ENCODE measurements at regions of chr7 and their contacts with region 1.

Region 1: DNA sequence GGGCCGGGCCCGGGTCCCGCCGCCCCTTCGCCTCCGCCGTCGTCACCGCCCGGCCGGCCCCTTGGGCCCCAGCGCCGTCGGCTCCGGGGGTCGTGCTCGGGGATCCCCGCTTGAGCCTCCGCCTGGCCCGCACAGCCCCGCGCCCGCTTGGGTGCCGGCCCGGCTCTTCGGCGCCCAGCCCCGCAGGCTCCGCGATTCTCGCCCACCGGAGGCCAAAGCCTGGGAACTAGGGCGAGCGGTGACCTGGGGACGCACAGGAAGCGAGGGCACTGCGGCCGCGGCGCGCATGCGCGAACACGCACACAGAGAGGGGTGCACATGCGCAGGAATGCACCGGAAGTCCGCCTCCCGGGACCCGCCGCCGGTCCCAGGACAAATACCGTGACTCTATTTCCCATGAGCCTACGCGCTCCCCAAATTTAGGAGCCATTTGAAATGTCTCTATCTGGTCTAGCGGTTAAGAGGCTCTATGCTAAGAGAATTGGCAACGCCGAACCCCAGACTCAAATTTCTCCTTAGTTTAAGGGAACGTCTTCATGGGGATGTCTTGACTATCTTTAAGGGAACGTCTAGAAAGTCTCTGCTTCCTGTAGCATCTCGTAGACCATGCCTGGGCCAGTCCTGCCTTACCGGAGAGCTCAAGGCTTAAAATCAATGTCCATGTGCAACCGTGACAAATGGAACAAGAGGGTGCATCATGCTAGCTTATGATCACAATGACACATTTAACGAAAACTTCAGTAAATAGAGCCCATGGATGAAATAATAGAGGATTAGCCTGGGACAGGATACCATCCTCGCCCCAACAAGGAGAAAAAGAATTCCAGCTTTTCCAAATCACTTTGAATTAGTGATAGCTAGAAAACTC is at the start of gene ZNF12:
- DNase-seq: peak; percentile 76 to 98
- H3K4me3 ChIP-seq: peak within 1 kb of the TSS; percentile 94 to 100
- H3K27ac ChIP-seq: peak within 1 kb of the TSS; percentile 80 to 88
- H3K4me1 ChIP-seq: peaks cover 7 to 16% of the 10 kb centered on the region in 2 donors
- H3K27me3 ChIP-seq: no peaks in the 10 kb centered on the region
- CTCF ChIP-seq: no peak
- total RNA-seq, gene ZNF12: 28.8 TPM

Region 2: GRCh38 chr7:6577365-6578113 is 129.4 kb before region 1 on chr7 and contains the start of gene ZDHHC4:
- intact Hi-C with region 1: loop called (anchors 5 kb)
- DNase-seq: peak; percentile 32 to 92
- H3K4me3 ChIP-seq: peak within 1 kb of the TSS; percentile 61 to 69
- H3K27ac ChIP-seq: peak within 1 kb of the TSS; percentile 89 to 94
- H3K4me1 ChIP-seq: peaks cover 0 to 7% of the 10 kb centered on the region in 2 donors
- H3K27me3 ChIP-seq: no peaks in the 10 kb centered on the region
- CTCF ChIP-seq: no peak
- total RNA-seq, gene ZDHHC4: 5.1 TPM

Region 3: GRCh38 chr7:6637544-6638229 is 69.2 kb before region 1 on chr7:
- intact Hi-C with region 1: loop called (anchors 5 kb)
- DNase-seq: peak in 1 of 2 donors; percentile 72
- H3K4me3 ChIP-seq: peak overlapping the region; percentile 97 to 99
- H3K27ac ChIP-seq: peak overlapping the region; percentile 50 to 71
- H3K4me1 ChIP-seq: peaks cover 4 to 12% of the 10 kb centered on the region in 2 donors
- H3K27me3 ChIP-seq: no peaks in the 10 kb centered on the region
- CTCF ChIP-seq: peak in 1 of 3 experiments; percentile 16

Region 4: GRCh38 chr7:6729492-6730342 is 22.8 kb after region 1 on chr7:
- intact Hi-C with region 1: loop called (anchors 1 kb)
- DNase-seq: peak; percentile 73 to 96
- H3K4me3 ChIP-seq: peak overlapping the region; percentile 79 to 94
- H3K27ac ChIP-seq: peak overlapping the region; percentile 73 to 86
- H3K4me1 ChIP-seq: peaks cover 0 to 8% of the 10 kb centered on the region in 2 donors
- H3K27me3 ChIP-seq: no peaks in the 10 kb centered on the region
- CTCF ChIP-seq: peak; percentile 6 to 12 (median 6)

Region 5: GRCh38 chr7:7182156-7183060 is 475.5 kb after region 1 on chr7 and contains the start of gene C1GALT1:
- intact Hi-C with region 1: loop called (anchors 5 kb)
- DNase-seq: peak; percentile 90 to 98
- H3K4me3 ChIP-seq: peak within 1 kb of the TSS; percentile 87 to 93
- H3K27ac ChIP-seq: peak within 1 kb of the TSS; percentile 89 to 94
- H3K4me1 ChIP-seq: peaks cover 0 to 7% of the 10 kb centered on the region in 2 donors
- H3K27me3 ChIP-seq: no peaks in the 10 kb centered on the region
- CTCF ChIP-seq: peak in 2 of 3 experiments; percentile 26 to 44
- total RNA-seq, gene C1GALT1: 11.0 TPM

Region 6: DNA sequence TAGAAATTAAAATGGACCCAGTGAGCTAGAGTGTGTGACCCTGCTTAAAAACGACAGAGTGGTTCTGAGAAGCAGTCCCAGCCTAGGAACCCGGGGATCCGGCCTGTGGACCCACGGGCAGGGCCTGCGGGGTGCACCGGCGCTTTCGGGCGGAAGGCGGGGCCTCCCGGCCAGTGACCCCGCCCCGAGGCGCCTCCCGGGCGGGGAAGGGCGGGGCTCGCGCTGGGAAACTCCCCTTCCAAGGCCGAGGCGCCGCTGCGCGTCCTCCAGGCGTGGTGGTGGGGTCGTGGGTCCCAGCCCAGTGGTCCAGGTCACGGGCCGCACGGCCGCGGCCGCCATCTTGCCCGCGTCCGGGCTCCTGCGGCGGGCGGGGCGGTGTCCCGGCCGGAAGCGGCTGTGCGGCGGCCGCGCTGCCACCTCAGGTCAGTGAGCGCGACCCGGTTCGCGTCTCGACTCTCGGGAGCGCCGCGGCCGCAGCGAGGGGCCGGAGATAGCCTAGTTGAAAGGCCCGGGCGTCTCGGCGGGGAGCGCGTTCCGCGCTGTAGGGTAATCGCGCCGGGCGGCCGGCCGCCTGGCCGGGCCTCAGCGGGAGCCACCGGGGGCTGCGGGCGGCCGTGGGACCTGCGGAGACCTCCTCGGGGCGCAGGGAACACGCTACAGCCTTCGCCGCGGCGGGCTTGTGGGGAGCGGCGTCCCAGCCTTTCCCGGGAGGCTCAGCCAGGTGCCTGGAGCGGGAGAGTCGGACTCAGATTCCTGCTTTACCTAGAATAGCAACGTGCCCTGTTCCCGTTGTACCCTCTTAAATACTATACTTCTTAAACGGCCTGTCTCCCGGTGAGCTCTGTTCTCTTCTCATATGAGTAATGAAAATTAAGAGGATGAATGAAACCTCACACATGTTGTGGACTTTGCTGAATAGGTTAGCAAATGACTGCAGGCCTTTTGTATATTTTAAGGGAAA is 860.0 kb after region 1 on chr7 and contains the start of gene MIOS:
- intact Hi-C with region 1: loop called (anchors 10 kb)
- DNase-seq: peak; percentile 10 to 90
- H3K4me3 ChIP-seq: peak within 1 kb of the TSS; percentile 85 to 93
- H3K27ac ChIP-seq: peak within 1 kb of the TSS; percentile 94 to 95
- H3K4me1 ChIP-seq: peaks cover 5 to 12% of the 10 kb centered on the region in 2 donors
- H3K27me3 ChIP-seq: no peaks in the 10 kb centered on the region
- CTCF ChIP-seq: no peak
- total RNA-seq, gene MIOS: 14.6 TPM